Panc1 (cell line): ENCODE measurements at regions of chr10 and their contacts with region 1.

Region 1: DNA sequence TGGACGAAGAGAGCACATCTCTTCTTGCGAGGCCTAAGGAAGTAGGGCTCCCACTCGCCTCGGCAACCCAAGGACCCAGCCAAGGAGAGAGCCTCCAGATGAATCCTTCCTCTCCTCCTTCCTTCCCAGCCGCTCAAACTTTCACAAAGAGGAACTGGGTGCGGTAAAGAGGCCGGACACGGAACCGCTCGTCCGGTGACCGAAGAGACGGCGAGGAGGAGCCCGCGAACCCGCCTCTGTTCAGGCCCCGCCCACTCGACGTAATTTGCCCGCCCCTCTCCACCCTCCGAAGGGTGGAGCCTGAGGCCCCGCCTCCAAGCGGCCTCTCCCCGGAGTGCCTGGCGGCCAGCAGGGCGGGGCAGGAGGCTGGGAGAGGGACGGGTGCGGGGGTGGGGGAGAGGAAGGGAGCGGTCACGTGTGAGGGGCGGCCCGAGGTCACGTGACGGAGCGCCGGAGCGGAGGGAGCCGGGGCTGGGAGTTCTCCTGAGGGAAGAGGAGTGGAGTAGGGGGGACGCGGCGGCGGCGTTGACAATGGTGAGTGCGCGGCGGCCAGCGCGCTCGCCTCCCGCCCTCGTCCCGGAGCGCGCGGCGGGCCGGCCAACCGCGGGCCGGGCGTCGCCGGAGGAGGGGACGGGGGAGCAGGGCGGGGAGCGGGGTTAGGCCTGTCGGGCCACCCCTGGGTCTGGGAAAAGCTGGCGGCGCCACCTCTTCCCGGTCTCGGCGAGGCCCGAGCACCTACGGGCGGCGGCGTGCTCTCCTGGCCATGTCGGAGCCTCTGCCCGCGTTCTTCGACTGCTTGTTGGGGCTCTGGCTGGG is at the start of gene VPS26A:
- DNase-seq: peak; percentile 86
- ATAC-seq: peak; percentile 93
- H3K4me3 ChIP-seq: peak within 1 kb of the TSS; percentile 81 to 83
- H3K27ac ChIP-seq: peak within 1 kb of the TSS; percentile 94
- H3K4me1 ChIP-seq: peaks cover 10% of the 10 kb centered on the region
- H3K27me3 ChIP-seq: no peaks in the 10 kb centered on the region
- CTCF ChIP-seq: no peak
- total RNA-seq, gene VPS26A: 88.9 TPM

Region 2: DNA sequence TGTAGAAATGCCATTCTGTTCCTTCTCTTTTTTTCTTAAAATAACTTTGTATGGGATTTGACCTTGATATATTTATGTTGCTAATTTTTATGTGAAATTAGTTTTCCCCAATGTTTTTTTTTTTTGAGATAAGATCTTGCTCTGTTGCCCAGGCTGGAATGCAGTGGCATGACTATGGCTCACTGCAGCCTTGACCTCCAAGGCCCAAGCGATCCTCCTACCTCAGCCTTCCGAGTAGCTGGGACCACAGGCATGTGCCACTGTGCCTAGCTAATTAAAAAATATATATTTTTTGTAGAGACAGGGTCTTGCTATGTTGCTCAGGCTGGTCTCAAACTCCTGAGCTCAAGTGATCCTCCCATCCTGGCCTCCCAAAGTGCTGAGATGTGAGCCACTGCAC is 16.0 kb after region 1 on chr10:
- CTCF ChIA-PET with region 1: no interaction called
- POLR2A ChIA-PET with region 1: interaction called, 12 read pairs
- in situ Hi-C with region 1: no loop called
- intact Hi-C with region 1: no loop called
- DNase-seq: no peak
- ATAC-seq: no peak
- H3K4me3 ChIP-seq: no peak overlapping the region
- H3K27ac ChIP-seq: no peak overlapping the region
- H3K4me1 ChIP-seq: no peaks in the 10 kb centered on the region
- H3K27me3 ChIP-seq: no peaks in the 10 kb centered on the region
- CTCF ChIP-seq: no peak

Region 3: GRCh38 chr10:69151984-69152383 is 28.0 kb after region 1 on chr10:
- CTCF ChIA-PET with region 1: no interaction called
- POLR2A ChIA-PET with region 1: interaction called, 10 read pairs
- in situ Hi-C with region 1: no loop called
- intact Hi-C with region 1: no loop called
- DNase-seq: no peak
- ATAC-seq: no peak
- H3K4me3 ChIP-seq: no peak overlapping the region
- H3K27ac ChIP-seq: no peak overlapping the region
- H3K4me1 ChIP-seq: no peaks in the 10 kb centered on the region
- H3K27me3 ChIP-seq: no peaks in the 10 kb centered on the region
- CTCF ChIP-seq: no peak